Activated CD4-positive, alpha-beta memory T cell treated with anti-CD3 and anti-CD28 coated beads, Interleukin-2, amount 10 ng/mL, durations not matched to agents 7 days and 5 days (primary cell): ENCODE measurements at regions of chr4 and their contacts with region 1.

Region 1: GRCh38 chr4:2281575-2282343 is 19.9 kb upstream of the MXD4 start:
- DNase-seq: peak; percentile 86
- H3K4me3 Mint-ChIP-seq: peak overlapping the region; percentile 4
- H3K27ac Mint-ChIP-seq: peak overlapping the region; percentile 88
- H3K4me1 Mint-ChIP-seq: peaks cover 33% of the 10 kb centered on the region
- H3K27me3 Mint-ChIP-seq: no peaks in the 10 kb centered on the region

Region 2: GRCh38 chr4:2262143-2262943 is 19.4 kb before region 1 on chr4:
- CTCF ChIA-PET with region 1: interaction called, 4 read pairs
- POLR2A ChIA-PET with region 1: interaction called, 10 read pairs
- DNase-seq: peak; percentile 99
- H3K4me3 Mint-ChIP-seq: peak overlapping the region; percentile 73
- H3K27ac Mint-ChIP-seq: peak overlapping the region; percentile 68
- H3K4me1 Mint-ChIP-seq: peaks cover 4% of the 10 kb centered on the region
- H3K27me3 Mint-ChIP-seq: no peaks in the 10 kb centered on the region

Region 3: DNA sequence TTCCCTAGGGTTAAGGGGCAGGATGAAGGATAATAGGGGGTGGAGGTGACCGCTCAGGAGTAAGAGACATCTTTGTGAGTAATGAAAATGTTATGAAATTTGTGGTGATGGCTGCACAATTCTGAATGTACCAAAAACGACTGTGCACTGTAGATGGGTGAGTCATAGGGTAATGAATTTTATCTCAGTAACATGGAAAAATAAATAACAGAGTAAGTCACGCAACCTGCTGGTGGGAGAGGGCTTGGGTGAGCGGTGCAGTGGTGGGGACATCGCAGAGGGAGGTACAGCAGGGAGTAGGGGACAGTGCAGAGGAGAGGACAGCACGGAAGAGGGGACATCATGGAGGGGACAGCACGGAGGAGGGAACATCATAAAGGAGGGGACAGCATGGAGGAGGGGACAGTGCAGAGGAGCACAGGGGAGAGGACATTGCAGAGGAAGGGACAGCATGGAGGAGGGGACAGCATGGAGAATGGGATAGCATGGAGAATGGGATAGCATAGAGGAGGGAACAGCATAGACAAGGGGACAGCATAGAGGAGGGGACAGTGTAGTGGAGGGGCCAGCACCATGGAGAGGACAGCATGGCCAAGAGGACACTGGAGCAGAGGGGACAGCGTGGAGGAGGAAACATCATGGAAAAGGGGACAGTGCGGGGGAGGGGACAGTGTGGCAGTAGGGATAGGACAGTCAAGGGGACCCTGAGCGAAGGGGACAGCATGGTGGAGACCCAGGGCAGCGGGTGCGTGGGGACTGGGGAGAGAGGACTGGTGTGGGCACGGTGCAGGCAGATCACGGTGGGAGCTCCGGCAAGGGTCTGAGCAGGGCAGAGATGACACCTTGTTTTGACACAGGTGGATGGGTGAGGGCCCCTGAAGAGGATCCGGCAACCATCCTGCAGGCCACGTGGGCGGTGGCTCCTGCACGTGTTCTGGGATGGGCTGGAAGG is 48.6 kb after region 1 on chr4:
- CTCF ChIA-PET with region 1: no interaction called
- POLR2A ChIA-PET with region 1: no interaction called
- DNase-seq: no peak
- H3K4me3 Mint-ChIP-seq: no peak overlapping the region
- H3K27ac Mint-ChIP-seq: no peak overlapping the region
- H3K4me1 Mint-ChIP-seq: no peaks in the 10 kb centered on the region
- H3K27me3 Mint-ChIP-seq: no peaks in the 10 kb centered on the region